ENCODE measurements at regions of chr2 and their contacts with region 1.

Region 1: DNA sequence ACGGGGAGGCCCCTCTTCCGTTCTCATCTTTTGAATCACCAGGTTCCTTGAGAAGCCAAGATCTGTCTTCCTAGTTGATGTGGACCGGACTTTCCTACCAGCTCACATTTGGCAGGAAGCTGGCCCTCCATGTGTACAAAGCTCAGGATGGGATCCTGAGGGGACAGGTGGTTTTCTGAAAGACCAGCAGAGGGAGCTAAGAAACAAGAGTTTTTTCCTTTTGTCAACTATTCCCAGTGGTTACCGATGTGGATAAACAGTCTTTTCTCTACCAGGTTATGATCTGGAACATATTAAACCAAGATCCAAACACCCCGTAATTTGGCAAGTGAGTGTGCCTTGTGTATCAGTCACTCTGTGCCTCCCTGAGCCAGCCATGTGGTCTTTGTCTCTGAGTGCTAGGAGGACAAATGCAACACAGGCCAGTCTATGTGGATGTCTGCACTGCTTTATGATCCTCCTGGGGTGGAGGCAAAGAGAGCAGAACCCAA is 25.1 kb upstream of the ARHGAP25 start:
- DNase-seq: peak; percentile 52
- H3K4me3 ChIP-seq: no peak overlapping the region
- H3K27ac ChIP-seq: no peak overlapping the region
- H3K4me1 ChIP-seq: no peaks in the 10 kb centered on the region
- H3K27me3 ChIP-seq: peaks cover 18 to 45% of the 10 kb centered on the region in 2 experiments
- CTCF ChIP-seq: peak; percentile 72 to 74
- POLR2A ChIP-seq: no peak

Region 2: DNA sequence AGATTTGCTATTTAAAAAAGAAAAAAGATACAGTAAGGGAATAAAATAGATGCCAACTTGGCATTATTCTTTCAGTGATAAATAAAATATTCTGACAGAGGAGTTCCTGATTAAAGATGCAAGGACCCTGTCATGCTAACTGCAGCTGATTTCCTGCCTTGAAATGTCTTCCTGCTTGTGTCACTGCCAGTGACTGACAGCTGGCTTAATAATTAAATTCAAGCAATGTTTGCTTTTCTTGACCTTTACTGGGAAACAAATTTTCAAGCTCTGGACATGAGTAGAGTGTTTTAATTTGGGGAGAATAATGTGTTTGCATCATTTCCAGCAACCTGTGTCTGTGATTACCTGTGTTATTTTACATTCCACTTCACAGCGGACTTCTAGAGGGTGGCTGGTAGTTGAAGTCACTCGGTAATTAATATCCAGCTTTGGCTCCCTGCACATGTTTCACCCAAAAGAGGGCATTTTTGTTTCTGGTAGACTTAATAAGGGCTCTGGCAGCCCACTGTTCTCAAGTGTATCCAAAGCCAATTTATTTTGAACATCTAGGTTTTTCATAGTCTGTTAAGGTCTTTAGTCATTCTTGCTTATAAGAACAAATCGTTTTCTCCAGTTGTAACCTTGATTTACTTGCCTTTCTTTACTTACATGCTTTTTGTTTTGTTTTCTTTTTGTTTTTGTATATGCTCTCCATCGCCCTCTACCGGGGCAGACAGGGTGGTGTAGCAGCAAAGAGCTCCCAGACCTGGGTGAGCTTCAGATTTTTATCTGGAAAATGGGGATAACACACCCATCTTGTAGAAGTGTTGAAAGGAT is 114.6 kb before region 1 on chr2:
- CTCF ChIA-PET with region 1: interaction called, 21 read pairs
- POLR2A ChIA-PET with region 1: no interaction called
- dilution Hi-C with region 1: no loop called
- intact Hi-C with region 1: no loop called
- DNase-seq: peak; percentile 63
- H3K4me3 ChIP-seq: no peak overlapping the region
- H3K27ac ChIP-seq: no peak overlapping the region
- H3K4me1 ChIP-seq: no peaks in the 10 kb centered on the region
- H3K27me3 ChIP-seq: peaks cover 0 to 4% of the 10 kb centered on the region in 2 experiments
- CTCF ChIP-seq: peak; percentile 75 to 77
- POLR2A ChIP-seq: no peak

Region 3: GRCh38 chr2:68721482-68722101 is 12.1 kb after region 1 on chr2:
- CTCF ChIA-PET with region 1: interaction called, 33 read pairs
- POLR2A ChIA-PET with region 1: no interaction called
- dilution Hi-C with region 1: no loop called
- intact Hi-C with region 1: no loop called
- DNase-seq: no peak
- H3K4me3 ChIP-seq: no peak overlapping the region
- H3K27ac ChIP-seq: no peak overlapping the region
- H3K4me1 ChIP-seq: no peaks in the 10 kb centered on the region
- H3K27me3 ChIP-seq: peaks cover 8 to 17% of the 10 kb centered on the region in 2 experiments
- CTCF ChIP-seq: no peak
- POLR2A ChIP-seq: no peak

Region 4: GRCh38 chr2:68837164-68837860 is 127.8 kb after region 1 on chr2:
- CTCF ChIA-PET with region 1: interaction called, 12 read pairs
- POLR2A ChIA-PET with region 1: no interaction called
- dilution Hi-C with region 1: no loop called
- intact Hi-C with region 1: loop called (anchors 2 kb)
- DNase-seq: peak; percentile 73
- H3K4me3 ChIP-seq: no peak overlapping the region
- H3K27ac ChIP-seq: no peak overlapping the region
- H3K4me1 ChIP-seq: peaks cover 10% of the 10 kb centered on the region
- H3K27me3 ChIP-seq: no peaks in the 10 kb centered on the region
- CTCF ChIP-seq: peak; percentile 60 to 69
- POLR2A ChIP-seq: no peak

Region 5: DNA sequence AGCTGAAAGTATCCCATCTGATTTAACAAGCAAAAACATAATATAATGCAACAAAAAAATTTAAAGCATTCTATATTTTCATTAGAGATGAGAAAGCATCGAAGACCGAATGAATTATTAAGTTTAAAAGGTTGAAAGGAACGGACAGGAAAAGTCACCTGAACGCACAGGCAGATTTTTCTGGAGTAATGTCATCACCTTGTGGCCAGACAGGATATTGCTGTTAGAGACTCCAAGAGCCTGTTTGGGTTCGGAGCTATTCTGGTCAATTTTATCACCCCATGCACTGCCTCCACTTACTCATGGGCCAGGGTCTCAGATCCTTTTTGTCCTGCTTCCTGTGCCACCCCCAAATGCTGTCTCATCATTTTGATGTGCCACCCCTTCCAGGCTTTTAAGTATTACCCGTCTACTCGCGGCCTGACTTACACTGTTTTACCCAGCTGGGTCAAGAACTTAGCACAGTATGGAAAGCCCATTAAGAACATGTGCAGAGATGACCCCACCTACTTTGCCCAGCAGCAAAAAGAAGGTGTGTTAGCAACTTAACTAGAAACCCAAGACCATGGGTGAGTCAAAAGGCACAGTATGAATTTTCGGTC is 215.9 kb after region 1 on chr2:
- CTCF ChIA-PET with region 1: interaction called, 517 read pairs
- POLR2A ChIA-PET with region 1: no interaction called
- dilution Hi-C with region 1: no loop called
- intact Hi-C with region 1: loop called (anchors 1 kb)
- DNase-seq: peak; percentile 58
- H3K4me3 ChIP-seq: no peak overlapping the region
- H3K27ac ChIP-seq: no peak overlapping the region
- H3K4me1 ChIP-seq: no peaks in the 10 kb centered on the region
- H3K27me3 ChIP-seq: peaks cover 2 to 9% of the 10 kb centered on the region in 2 experiments
- CTCF ChIP-seq: peak; percentile 83 to 87
- POLR2A ChIP-seq: no peak

Region 6: GRCh38 chr2:69565431-69565839 is 856.0 kb after region 1 on chr2:
- CTCF ChIA-PET with region 1: no interaction called
- POLR2A ChIA-PET with region 1: no interaction called
- dilution Hi-C with region 1: no loop called
- intact Hi-C with region 1: no loop called
- DNase-seq: peak; percentile 47
- H3K4me3 ChIP-seq: no peak overlapping the region
- H3K27ac ChIP-seq: no peak overlapping the region
- H3K4me1 ChIP-seq: peaks cover 5% of the 10 kb centered on the region
- H3K27me3 ChIP-seq: no peaks in the 10 kb centered on the region
- CTCF ChIP-seq: peak; percentile 82 to 86
- POLR2A ChIP-seq: no peak

Region 7: DNA sequence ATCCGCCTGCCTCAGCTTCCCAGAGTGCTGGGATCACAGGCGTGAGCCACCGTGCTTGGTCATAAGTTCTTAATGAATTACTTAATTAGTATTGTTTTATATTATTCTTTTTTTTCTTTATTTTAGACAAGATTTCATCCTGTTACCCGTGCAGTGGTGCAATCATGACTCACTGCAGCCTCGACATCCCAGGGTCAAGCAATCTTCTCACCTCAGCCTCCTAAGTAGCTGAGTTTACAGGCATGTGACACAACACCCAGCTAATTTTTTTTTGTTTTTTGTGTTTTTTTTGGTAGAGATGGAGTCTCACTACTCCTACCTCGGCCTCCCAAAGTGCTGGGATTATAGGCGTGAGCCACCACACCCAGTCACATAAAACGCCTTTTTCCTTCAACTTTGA is 1464.1 kb after region 1 on chr2:
- CTCF ChIA-PET with region 1: no interaction called
- POLR2A ChIA-PET with region 1: no interaction called
- dilution Hi-C with region 1: no loop called
- intact Hi-C with region 1: no loop called
- DNase-seq: no peak
- H3K4me3 ChIP-seq: no peak overlapping the region
- H3K27ac ChIP-seq: no peak overlapping the region
- H3K4me1 ChIP-seq: no peaks in the 10 kb centered on the region
- H3K27me3 ChIP-seq: no peaks in the 10 kb centered on the region
- CTCF ChIP-seq: no peak
- POLR2A ChIP-seq: no peak